CD14-positive monocyte (primary cell): ENCODE measurements at regions of chr19 and their contacts with region 1.

Region 1: GRCh38 chr19:43675269-43675879 is 5.4 kb upstream of the PLAUR start:
- DNase-seq: peak in 2 of 3 donors; percentile 52 to 87
- H3K4me3 ChIP-seq: peak overlapping the region in 1 of 3 experiments; percentile 53
- H3K4me3 Mint-ChIP-seq: peak overlapping the region; percentile 61 to 93
- H3K27ac ChIP-seq: peak overlapping the region; percentile 99 to 100
- H3K27ac Mint-ChIP-seq: peak overlapping the region; percentile 96 to 100 (median 99)
- H3K4me1 ChIP-seq: peaks cover 52 to 61% of the 10 kb centered on the region in 2 donors
- H3K4me1 Mint-ChIP-seq: peaks cover 47% of the 10 kb centered on the region
- H3K27me3 ChIP-seq: no peaks in the 10 kb centered on the region
- H3K27me3 Mint-ChIP-seq: peaks cover 0 to 2% (median 0%) of the 10 kb centered on the region in 3 donors
- CTCF ChIP-seq: no peak

Region 2: GRCh38 chr19:43692877-43693276 is 17.5 kb after region 1 on chr19:
- intact Hi-C with region 1: loop called in 1 of 2 experiments (anchors 2 kb)
- DNase-seq: peak; percentile 82 to 95 (median 93)
- H3K4me3 ChIP-seq: peak overlapping the region in 2 of 3 experiments; percentile 0 to 62
- H3K4me3 Mint-ChIP-seq: peak overlapping the region; percentile 67 to 77
- H3K27ac ChIP-seq: peak overlapping the region; percentile 95 to 96
- H3K27ac Mint-ChIP-seq: peak overlapping the region; percentile 99 to 100 (median 99)
- H3K4me1 ChIP-seq: peaks cover 62 to 77% of the 10 kb centered on the region in 2 donors
- H3K4me1 Mint-ChIP-seq: peaks cover 70% of the 10 kb centered on the region
- H3K27me3 ChIP-seq: no peaks in the 10 kb centered on the region
- H3K27me3 Mint-ChIP-seq: peaks cover 0 to 10% (median 5%) of the 10 kb centered on the region in 3 donors
- CTCF ChIP-seq: no peak

Region 3: GRCh38 chr19:43700395-43701000 is 25.1 kb after region 1 on chr19:
- intact Hi-C with region 1: loop called in 1 of 2 experiments (anchors 1 kb)
- DNase-seq: peak; percentile 56 to 79 (median 69)
- H3K4me3 ChIP-seq: peak overlapping the region; percentile 45 to 71 (median 57)
- H3K4me3 Mint-ChIP-seq: peak overlapping the region; percentile 75 to 86
- H3K27ac ChIP-seq: peak overlapping the region; percentile 90 to 97
- H3K27ac Mint-ChIP-seq: peak overlapping the region; percentile 92 to 100 (median 99)
- H3K4me1 ChIP-seq: peaks cover 32 to 41% of the 10 kb centered on the region in 2 donors
- H3K4me1 Mint-ChIP-seq: peaks cover 56% of the 10 kb centered on the region
- H3K27me3 ChIP-seq: no peaks in the 10 kb centered on the region
- H3K27me3 Mint-ChIP-seq: peaks cover 0 to 18% (median 14%) of the 10 kb centered on the region in 3 donors
- CTCF ChIP-seq: no peak